Mammary epithelial cell (primary cell): ENCODE measurements at regions of chr9 and their contacts with region 1.

Region 1: GRCh38 chr9:91164724-91165520 is 196.8 kb downstream of the AUH start:
- DNase-seq: peak; percentile 93
- H3K4me3 ChIP-seq: no peak overlapping the region
- H3K27ac ChIP-seq: peak overlapping the region; percentile 18
- H3K4me1 ChIP-seq: peaks cover 41% of the 10 kb centered on the region
- H3K27me3 ChIP-seq: no peaks in the 10 kb centered on the region
- CTCF ChIP-seq: no peak

Region 2: GRCh38 chr9:90942555-90942954 is 222.4 kb before region 1 on chr9:
- CTCF ChIA-PET with region 1: no interaction called
- dilution Hi-C with region 1: loop called (anchors 5 kb)
- in situ Hi-C with region 1: no loop called
- intact Hi-C with region 1: no loop called
- DNase-seq: peak; percentile 100
- H3K4me3 ChIP-seq: no peak overlapping the region
- H3K27ac ChIP-seq: peak overlapping the region; percentile 87
- H3K4me1 ChIP-seq: peaks cover 26% of the 10 kb centered on the region
- H3K27me3 ChIP-seq: no peaks in the 10 kb centered on the region
- CTCF ChIP-seq: no peak

Region 3: DNA sequence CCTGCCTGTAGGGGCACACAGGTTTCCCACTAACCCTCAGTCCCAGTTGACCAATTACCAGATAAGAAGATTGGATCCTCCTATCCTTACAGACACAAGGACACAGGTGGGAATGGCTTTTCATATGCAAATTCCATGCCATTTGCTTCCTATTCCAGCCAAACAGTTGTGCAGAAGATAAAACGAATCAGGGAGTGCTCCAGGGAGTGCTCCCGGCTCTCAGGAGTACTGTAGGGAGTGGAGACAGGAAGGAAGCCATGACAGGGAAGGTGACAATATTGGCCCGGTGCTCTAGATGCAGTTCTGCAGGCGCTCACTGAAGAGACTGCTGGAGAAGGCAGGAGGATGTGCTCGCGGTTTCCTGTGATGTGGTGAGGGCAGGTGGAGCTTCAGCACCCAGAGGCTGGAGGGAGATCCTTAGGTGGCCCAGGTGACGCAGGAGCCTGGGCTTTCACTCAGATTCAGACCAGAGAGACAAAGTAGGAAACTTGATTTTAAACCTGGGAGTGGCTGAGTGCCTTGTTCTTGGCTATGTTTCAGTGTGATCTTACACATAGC is 63.2 kb before region 1 on chr9:
- CTCF ChIA-PET with region 1: no interaction called
- dilution Hi-C with region 1: no loop called
- in situ Hi-C with region 1: no loop called
- intact Hi-C with region 1: loop called (anchors 2 kb)
- DNase-seq: no peak
- H3K4me3 ChIP-seq: no peak overlapping the region
- H3K27ac ChIP-seq: no peak overlapping the region
- H3K4me1 ChIP-seq: peaks cover 15% of the 10 kb centered on the region
- H3K27me3 ChIP-seq: no peaks in the 10 kb centered on the region
- CTCF ChIP-seq: no peak

Region 4: GRCh38 chr9:91131433-91131839 is 33.5 kb before region 1 on chr9:
- CTCF ChIA-PET with region 1: interaction called, 4 read pairs
- dilution Hi-C with region 1: no loop called
- in situ Hi-C with region 1: no loop called
- intact Hi-C with region 1: loop called (anchors 2 kb)
- DNase-seq: peak; percentile 97
- H3K4me3 ChIP-seq: no peak overlapping the region
- H3K27ac ChIP-seq: peak overlapping the region; percentile 91
- H3K4me1 ChIP-seq: peaks cover 19% of the 10 kb centered on the region
- H3K27me3 ChIP-seq: no peaks in the 10 kb centered on the region
- CTCF ChIP-seq: no peak

Region 5: DNA sequence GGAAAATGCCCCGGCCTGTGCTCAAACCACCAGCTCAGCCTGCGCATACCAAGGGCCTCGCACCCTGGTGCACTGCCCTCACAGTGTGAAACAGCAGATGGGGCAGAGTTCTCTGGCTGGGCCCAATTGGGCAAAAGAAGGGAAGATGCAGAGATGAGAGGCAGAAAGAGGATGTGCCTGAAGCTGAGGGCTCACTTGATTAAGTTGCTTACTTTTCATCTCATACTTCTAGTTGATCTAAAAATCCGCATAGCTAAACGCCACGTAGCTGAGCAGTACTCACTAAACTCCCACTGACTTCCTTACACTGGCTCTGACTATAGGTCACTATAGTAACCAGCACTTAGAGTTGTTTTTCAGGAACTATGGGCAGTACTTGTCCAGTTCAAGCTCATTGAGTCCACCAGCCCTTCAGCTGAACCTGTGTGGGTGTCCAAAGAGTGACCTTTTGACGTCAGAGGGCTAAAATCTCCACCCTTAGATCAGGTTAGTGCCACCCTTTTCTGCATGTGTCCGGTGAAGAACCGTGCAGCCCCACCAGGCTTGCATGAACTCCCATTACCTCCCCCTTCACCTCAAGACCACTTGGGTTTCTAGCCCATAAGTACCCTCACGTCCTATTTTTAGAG is 18.4 kb before region 1 on chr9:
- CTCF ChIA-PET with region 1: no interaction called
- dilution Hi-C with region 1: no loop called
- in situ Hi-C with region 1: no loop called
- intact Hi-C with region 1: loop called (anchors 1 kb)
- DNase-seq: no peak
- H3K4me3 ChIP-seq: no peak overlapping the region
- H3K27ac ChIP-seq: no peak overlapping the region
- H3K4me1 ChIP-seq: peaks cover 15% of the 10 kb centered on the region
- H3K27me3 ChIP-seq: no peaks in the 10 kb centered on the region
- CTCF ChIP-seq: no peak

Region 6: DNA sequence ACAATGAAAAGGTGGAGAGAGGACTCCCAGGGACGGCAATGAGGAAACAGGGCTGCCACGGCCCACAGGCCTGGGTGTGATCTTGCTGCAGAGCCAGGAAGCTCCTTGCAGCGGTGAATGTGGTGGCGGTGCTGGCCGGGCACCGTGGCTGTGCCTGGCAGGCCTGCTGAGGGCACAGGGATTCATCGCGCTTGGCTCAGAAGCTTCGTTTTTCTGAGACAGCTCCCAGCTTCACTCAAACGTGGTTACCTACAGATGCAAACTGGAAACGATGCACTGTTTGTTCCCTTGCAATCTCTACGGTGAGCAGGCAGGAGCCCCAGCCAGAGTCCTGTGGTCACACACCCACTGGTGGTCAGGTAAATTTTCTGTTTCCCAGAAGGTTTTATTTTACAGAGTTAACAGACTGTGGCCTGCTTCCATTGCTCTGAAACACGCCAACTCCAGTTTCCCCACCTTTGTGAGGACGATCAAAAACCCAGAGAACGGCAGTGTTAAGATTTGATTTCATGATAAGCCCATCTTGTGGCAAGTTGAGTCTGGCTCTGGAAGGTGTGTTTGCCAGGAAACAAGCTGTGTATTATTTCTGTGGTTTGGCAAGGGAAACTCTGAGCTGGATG is 12.8 kb after region 1 on chr9:
- CTCF ChIA-PET with region 1: no interaction called
- dilution Hi-C with region 1: no loop called
- in situ Hi-C with region 1: no loop called
- intact Hi-C with region 1: loop called (anchors 2 kb)
- DNase-seq: peak; percentile 96
- H3K4me3 ChIP-seq: no peak overlapping the region
- H3K27ac ChIP-seq: peak overlapping the region; percentile 78
- H3K4me1 ChIP-seq: peaks cover 46% of the 10 kb centered on the region
- H3K27me3 ChIP-seq: no peaks in the 10 kb centered on the region
- CTCF ChIP-seq: no peak